ENCODE measurements at regions of chr4 and their contacts with region 1.

Region 1: GRCh38 chr4:20370274-20370673 is 118.6 kb downstream of the SLIT2 start:
- DNase-seq: peak; percentile 85
- ATAC-seq: peak; percentile 88
- H3K4me3 ChIP-seq: no peak overlapping the region
- H3K27ac ChIP-seq: no peak overlapping the region
- H3K4me1 ChIP-seq: peaks cover 8% of the 10 kb centered on the region
- H3K27me3 ChIP-seq: no peaks in the 10 kb centered on the region
- CTCF ChIP-seq: no peak
- POLR2A ChIP-seq: no peak
- RAD21 ChIP-seq: no peak

Region 2: GRCh38 chr4:20384456-20384855 is 14.2 kb after region 1 on chr4:
- CTCF ChIA-PET with region 1: interaction called, 3 read pairs
- POLR2A ChIA-PET with region 1: no interaction called
- dilution Hi-C with region 1: no loop called
- in situ Hi-C with region 1: no loop called
- intact Hi-C with region 1: loop called (anchors 2 kb)
- DNase-seq: no peak
- ATAC-seq: no peak
- H3K4me3 ChIP-seq: no peak overlapping the region
- H3K27ac ChIP-seq: no peak overlapping the region
- H3K4me1 ChIP-seq: no peaks in the 10 kb centered on the region
- H3K27me3 ChIP-seq: no peaks in the 10 kb centered on the region
- CTCF ChIP-seq: no peak
- POLR2A ChIP-seq: no peak
- RAD21 ChIP-seq: no peak

Region 3: DNA sequence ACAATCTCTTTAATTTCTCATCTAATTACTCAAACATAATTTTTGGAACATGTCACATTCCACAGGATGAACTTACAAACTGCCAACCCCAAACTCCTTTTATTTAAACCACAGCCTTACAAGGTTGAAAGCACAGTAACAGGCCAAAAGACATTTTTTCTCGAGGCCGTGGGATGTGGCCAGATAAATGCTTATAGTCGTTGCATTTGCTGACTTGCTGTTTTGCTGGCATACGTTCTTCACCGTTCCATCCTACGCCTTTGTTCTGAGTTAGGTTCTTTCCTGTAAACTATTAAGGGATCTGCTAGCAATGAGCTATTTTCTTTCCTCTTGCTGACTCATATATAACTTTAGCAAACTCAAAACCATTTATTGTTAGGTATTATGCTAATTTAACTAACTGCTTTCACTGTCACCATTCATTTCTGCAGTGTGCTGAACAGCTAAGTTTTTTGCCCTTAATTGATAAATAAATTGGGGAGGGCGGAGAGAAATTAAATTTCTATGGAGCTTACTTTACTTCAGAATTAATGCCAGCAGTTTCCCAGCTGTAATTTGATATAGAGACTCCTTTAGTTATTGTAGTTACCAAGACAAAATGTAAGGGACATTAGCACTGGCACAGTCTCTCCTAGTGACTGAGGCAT is 194.9 kb after region 1 on chr4:
- CTCF ChIA-PET with region 1: no interaction called
- POLR2A ChIA-PET with region 1: no interaction called
- dilution Hi-C with region 1: no loop called
- in situ Hi-C with region 1: no loop called
- intact Hi-C with region 1: no loop called
- DNase-seq: peak; percentile 67
- ATAC-seq: peak; percentile 53
- H3K4me3 ChIP-seq: no peak overlapping the region
- H3K27ac ChIP-seq: no peak overlapping the region
- H3K4me1 ChIP-seq: no peaks in the 10 kb centered on the region
- H3K27me3 ChIP-seq: no peaks in the 10 kb centered on the region
- CTCF ChIP-seq: no peak
- POLR2A ChIP-seq: no peak
- RAD21 ChIP-seq: no peak